Esophagus squamous epithelium (tissue), 5 donors: ENCODE measurements at regions of chr6 and their contacts with region 1.

Region 1: DNA sequence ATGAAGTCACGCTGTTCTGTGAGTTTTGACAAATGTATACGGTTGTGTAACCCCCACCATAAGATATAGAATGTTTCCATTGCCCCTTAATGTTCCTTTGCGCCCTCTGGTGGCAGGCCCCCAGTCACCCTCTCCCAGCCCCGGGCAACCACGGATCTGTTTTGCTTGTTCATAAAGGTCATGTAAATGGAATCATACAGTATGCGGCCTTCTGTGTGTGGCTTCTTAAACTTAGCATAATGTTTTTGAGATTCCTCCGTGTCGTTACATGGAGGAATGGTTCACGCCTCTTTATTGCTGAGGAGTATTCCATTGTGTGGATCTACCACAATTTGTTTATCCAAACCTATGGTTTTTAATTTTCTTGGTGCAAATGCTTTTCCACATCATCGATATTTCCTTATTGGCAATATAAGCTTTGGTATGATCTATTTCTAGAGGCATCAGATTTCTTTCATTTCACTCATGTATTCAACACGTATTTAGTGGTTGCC is 28.4 kb downstream of the LYRM2 start:
- DNase-seq: peak; percentile 6
- H3K4me3 ChIP-seq: no peak overlapping the region
- H3K27ac ChIP-seq: no peak overlapping the region
- H3K4me1 ChIP-seq: no peaks in the 10 kb centered on the region
- H3K27me3 ChIP-seq: no peaks in the 10 kb centered on the region
- CTCF ChIP-seq: peak; percentile 73 to 93 (median 79)
- POLR2A ChIP-seq: no peak

Region 2: DNA sequence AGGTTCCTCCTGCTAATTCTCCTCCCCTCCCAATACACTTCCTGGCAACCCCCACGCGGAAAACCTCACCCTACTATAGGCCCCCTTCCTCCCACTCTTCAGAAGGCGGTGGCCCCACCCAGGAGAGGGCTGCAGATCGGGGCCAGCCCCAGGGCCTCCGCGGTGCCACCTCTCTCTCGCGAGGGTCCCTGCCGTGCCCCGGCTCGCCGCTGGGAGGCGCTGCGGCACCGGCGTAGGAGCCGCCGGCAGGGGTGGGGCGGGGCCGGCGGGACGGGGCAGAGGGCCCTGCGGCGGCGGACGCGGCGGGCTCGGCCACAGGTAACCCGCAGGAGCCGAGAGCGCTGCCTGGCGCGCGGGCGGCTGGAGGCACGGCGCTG is 177.3 kb before region 1 on chr6 and contains the start of gene ANKRD6:
- intact Hi-C with region 1: loop called (anchors 5 kb)
- DNase-seq: no peak
- H3K4me3 ChIP-seq: peak within 1 kb of the TSS; percentile 63 to 92 (median 84)
- H3K27ac ChIP-seq: peak within 1 kb of the TSS; percentile 31 to 69 (median 56)
- H3K4me1 ChIP-seq: peaks cover 4 to 50% (median 15%) of the 10 kb centered on the region in 3 donors
- H3K27me3 ChIP-seq: no peaks in the 10 kb centered on the region
- CTCF ChIP-seq: peak; percentile 74 to 98 (median 96)
- POLR2A ChIP-seq: no peak
- total RNA-seq, gene ANKRD6: 5.8 to 12.0 (median 7.3) TPM

Region 3: GRCh38 chr6:89471287-89471867 is 138.8 kb before region 1 on chr6:
- intact Hi-C with region 1: no loop called
- DNase-seq: no peak
- H3K4me3 ChIP-seq: no peak overlapping the region
- H3K27ac ChIP-seq: no peak overlapping the region
- H3K4me1 ChIP-seq: peaks cover 0 to 23% (median 3%) of the 10 kb centered on the region in 3 donors
- H3K27me3 ChIP-seq: no peaks in the 10 kb centered on the region
- CTCF ChIP-seq: no peak
- POLR2A ChIP-seq: no peak

Region 4: DNA sequence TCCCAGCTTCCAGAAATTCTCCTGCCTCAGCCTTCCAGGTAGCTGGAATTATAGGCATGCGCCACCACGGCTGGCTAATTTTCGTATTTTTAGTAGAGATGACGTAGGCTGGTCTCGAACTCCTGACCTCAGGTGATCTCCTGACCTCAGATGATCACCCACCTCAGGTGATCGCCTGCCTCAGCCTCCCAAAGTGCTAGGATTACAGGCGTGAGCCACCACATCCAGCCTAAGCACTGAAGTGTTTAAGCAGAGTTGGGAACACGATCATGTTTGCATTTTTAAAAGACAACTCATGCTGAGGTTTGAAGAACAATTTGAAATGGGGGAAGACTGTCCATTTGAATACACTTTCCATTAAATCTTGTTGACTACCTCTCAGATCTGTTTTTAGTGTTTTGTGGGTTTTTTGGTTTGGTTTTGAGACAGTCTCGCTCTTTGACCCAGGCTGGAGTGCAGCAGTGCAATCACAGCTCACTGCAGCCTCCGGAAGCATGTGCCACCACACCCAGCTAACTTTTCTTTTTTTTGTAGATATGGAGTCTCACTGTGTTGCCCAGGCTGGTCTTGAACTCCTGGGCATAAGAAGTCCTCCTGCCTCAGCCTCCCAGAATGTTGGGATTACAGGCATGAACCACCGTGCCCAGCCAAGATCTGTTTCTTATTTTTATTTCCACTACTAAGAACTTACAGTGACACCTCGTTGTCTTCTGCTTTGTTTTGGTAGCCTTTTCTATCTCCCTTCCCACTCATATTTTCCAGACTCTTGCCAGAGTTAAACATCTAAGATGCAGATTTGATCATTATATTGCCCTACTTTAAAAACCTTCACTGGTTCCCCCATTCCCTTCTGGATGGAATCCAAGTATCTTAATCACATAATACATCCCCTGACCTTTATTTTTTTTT is 224.9 kb after region 1 on chr6:
- intact Hi-C with region 1: no loop called
- DNase-seq: no peak
- H3K4me3 ChIP-seq: no peak overlapping the region
- H3K27ac ChIP-seq: no peak overlapping the region
- H3K4me1 ChIP-seq: peaks cover 5 to 13% (median 9%) of the 10 kb centered on the region in 3 donors
- H3K27me3 ChIP-seq: no peaks in the 10 kb centered on the region
- CTCF ChIP-seq: no peak
- POLR2A ChIP-seq: no peak